Lower leg skin (tissue), 4 donors: ENCODE measurements at regions of chr14 and their contacts with region 1.

Region 1: DNA sequence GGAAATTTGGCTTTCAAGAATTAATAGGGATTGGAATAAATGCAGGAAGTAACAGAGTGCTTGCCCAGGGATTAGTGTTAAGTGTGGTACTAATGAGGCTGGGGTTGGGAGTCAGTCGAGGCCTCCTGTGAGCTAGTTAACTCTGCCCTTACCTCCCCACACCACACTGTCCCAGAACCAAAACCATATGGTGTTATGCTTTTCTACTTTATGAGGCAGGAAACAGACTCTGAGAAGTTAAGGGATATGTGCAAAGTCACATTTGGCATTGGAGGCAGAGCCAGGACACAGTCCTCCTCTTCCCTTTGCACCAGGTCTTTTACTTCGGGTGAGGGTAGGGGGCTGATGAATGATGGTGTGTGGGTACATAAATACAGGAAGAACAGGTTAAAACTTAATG is 41.9 kb downstream of the PELI2 start:
- DNase-seq: no peak
- H3K4me3 ChIP-seq: no peak overlapping the region
- CTCF ChIP-seq: no peak
- POLR2A ChIP-seq: no peak

Region 2: GRCh38 chr14:55572578-55572977 is 587.5 kb before region 1 on chr14:
- intact Hi-C with region 1: no loop called
- DNase-seq: no peak
- H3K4me3 ChIP-seq: no peak overlapping the region
- CTCF ChIP-seq: no peak
- POLR2A ChIP-seq: no peak

Region 3: DNA sequence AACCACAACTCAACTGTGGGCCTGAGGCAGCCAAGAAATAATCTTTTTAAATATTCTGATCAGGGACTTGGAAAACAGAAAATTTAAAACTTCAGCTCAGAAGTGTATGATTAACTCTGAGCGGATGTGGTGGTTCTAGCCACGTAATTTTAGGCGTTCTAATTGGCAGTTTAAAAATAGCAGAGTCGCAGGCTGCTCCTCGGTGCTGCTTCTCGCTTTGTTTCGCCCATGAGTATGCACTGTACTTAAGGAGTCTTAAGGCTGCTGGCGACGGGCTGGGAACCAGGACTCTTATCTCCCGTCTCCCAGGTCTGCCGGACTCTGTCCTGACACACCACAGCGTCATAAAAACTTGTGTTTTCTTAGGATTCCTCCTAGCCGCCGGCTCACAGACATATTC is 155.3 kb before region 1 on chr14:
- intact Hi-C with region 1: loop called (anchors 10 kb)
- DNase-seq: peak in 1 of 2 donors; percentile 85
- H3K4me3 ChIP-seq: no peak overlapping the region
- CTCF ChIP-seq: no peak
- POLR2A ChIP-seq: no peak

Region 4: DNA sequence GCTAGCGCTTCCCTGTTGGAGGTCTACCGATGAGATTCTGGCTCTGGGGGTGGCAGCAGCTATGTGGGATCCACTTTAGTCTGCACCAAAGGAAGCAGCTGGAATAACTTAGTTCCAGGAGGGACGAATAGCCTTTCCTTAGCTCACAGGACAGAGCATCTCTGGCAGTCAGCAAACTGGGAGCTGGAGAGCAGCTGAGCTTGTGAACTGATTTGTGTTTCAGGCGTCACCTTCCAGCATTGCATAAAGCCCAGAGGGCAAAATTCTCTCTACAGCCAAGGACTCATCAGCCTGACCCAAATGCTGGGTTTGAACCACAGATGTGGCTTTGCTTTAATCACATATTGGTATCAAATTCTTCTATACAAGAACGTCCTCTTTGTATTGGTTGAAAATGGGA is 123.7 kb before region 1 on chr14:
- intact Hi-C with region 1: no loop called
- DNase-seq: no peak
- H3K4me3 ChIP-seq: no peak overlapping the region
- CTCF ChIP-seq: no peak
- POLR2A ChIP-seq: no peak

Region 5: DNA sequence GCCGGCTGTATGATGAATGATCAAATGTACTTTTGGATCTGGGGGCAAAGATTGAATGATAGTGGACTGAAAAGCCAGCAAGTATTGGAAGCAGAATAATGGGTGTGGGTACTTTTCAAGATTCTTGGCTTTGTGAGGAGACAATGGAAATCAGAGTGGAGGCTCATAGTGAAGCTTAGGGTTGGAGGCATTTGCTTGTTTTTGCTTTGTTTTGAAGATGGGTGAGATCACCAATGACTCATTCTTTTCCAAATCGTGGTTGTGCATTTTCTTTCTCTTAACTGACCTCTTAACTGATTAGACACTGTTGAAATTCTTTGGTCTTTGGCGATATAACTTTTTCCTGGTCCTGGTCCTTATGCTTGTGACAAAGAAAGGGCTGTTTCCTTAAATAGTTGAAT is 12.5 kb after region 1 on chr14:
- intact Hi-C with region 1: no loop called
- DNase-seq: no peak
- H3K4me3 ChIP-seq: no peak overlapping the region
- CTCF ChIP-seq: no peak
- POLR2A ChIP-seq: no peak